BJ (cell line): ENCODE measurements at regions of chr3 and their contacts with region 1.

Region 1: GRCh38 chr3:186540221-186540834 is 3.9 kb downstream of the CRYGS start:
- DNase-seq: peak; percentile 15
- H3K4me3 ChIP-seq: no peak overlapping the region
- H3K27me3 ChIP-seq: no peaks in the 10 kb centered on the region
- CTCF ChIP-seq: peak; percentile 63

Region 2: DNA sequence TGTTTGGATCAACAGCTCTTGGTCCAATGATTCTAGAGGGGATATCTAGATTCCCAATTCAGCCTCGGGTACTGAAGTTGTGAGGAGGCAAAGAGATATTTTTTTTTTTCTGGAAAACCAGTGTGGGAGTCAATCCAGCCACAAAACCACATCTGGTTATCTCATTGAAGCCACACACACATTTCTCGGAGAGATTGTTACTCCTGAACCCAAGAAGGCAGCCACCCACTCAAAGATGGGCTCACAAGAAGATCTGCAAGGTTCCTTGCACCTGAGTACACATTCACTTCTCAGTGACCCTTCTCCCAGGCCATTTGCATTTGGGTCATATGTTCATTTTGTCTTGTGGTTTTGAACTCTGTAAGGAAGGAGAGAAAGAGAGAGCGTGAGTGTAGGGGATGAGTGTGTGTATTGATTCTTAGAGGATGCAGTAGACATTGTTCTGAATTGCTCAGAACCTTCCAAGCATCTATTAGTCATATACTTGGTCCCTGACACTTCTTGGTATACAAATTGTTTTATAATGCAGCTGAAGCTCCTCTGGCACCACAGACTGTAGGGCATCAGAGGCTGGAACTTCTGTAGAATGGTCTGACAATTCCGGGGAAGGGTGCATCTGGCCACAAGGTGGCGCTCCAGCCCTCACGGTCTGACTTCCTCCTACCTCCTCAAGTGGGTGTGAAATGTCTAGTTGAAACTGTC is 563.2 kb before region 1 on chr3:
- CTCF ChIA-PET with region 1: interaction called, 23 read pairs
- POLR2A ChIA-PET with region 1: no interaction called
- DNase-seq: no peak
- H3K4me3 ChIP-seq: no peak overlapping the region
- H3K27me3 ChIP-seq: no peaks in the 10 kb centered on the region
- CTCF ChIP-seq: peak; percentile 96

Region 3: GRCh38 chr3:185983495-185984141 is 556.7 kb before region 1 on chr3:
- CTCF ChIA-PET with region 1: interaction called, 23 read pairs
- POLR2A ChIA-PET with region 1: no interaction called
- DNase-seq: no peak
- H3K4me3 ChIP-seq: no peak overlapping the region
- H3K27me3 ChIP-seq: peaks cover 3% of the 10 kb centered on the region; the same call in 1 of the 2 replicates
- CTCF ChIP-seq: peak; percentile 90

Region 4: DNA sequence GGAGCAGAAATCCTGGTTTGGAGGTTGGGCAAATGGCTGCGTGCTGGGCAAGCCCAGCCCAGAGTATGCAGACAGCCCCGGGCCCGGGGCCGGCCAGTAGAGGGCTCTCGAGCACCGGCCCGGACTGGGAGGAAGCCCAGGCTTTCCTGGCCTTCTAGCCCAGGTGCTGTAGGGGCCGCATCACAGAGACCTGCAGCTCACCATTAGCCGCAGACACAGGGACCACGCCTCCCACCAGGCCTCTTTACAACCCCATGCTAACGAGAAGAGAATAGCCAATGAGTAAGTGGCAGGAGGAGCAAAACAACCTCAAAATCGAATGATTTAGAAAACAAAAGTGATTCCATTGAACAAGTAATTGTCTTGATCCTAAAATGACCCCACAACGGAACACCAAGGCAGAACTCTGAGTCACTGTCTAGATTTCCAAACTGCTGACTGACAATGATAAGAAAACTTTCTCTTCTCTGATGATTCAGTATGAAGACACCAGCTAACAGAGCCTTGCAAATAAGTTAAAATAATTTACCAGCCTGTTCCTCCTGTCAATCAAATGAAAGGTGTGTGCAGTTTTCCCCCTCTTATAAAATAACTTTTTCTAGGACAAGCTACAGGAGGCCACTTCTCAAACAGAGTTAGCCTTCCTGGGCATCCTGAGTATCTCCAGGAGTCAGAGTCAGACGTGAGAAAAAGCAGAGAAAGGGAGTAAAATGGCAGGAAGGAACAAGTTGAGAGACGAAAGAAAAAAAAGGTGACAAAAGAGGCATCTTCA is 280.5 kb before region 1 on chr3:
- CTCF ChIA-PET with region 1: interaction called, 56 read pairs
- POLR2A ChIA-PET with region 1: interaction called, 8 read pairs
- DNase-seq: no peak
- H3K4me3 ChIP-seq: no peak overlapping the region
- H3K27me3 ChIP-seq: peaks cover 6% of the 10 kb centered on the region; the same call in 1 of the 2 replicates
- CTCF ChIP-seq: peak; percentile 97

Region 5: DNA sequence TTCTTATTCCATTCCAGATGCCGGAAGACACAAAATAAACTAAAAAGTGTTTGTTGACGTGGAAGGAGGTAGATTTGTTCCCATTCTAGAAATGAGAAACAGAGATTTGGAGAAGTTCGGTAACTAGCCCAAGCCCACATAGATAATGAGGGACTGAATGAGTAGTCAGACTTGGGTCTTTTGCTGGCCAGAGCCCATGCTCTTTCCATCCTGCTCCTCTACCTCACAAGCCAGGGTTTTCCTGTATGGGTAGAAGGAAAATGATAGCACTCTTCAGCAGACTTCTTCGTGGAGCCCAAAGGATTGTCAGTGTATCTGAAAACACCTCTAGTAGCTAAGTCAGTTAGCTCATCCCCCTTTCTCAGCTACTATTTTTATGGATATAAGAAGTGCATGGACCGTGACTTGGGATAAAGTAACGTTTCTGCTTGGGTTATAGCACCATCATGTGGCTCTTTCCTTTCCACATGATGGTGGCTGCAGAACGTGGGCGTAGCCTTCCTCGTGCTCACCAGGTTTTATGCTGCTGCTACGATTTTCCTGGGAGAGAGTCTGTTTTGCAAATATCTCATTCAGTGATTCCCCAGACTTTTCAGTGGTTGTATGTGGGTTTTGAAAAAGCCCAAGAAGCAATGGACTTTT is 262.9 kb before region 1 on chr3:
- CTCF ChIA-PET with region 1: interaction called, 18 read pairs
- POLR2A ChIA-PET with region 1: no interaction called
- DNase-seq: no peak
- H3K4me3 ChIP-seq: no peak overlapping the region
- H3K27me3 ChIP-seq: peaks cover 1% of the 10 kb centered on the region
- CTCF ChIP-seq: peak; percentile 61

Region 6: DNA sequence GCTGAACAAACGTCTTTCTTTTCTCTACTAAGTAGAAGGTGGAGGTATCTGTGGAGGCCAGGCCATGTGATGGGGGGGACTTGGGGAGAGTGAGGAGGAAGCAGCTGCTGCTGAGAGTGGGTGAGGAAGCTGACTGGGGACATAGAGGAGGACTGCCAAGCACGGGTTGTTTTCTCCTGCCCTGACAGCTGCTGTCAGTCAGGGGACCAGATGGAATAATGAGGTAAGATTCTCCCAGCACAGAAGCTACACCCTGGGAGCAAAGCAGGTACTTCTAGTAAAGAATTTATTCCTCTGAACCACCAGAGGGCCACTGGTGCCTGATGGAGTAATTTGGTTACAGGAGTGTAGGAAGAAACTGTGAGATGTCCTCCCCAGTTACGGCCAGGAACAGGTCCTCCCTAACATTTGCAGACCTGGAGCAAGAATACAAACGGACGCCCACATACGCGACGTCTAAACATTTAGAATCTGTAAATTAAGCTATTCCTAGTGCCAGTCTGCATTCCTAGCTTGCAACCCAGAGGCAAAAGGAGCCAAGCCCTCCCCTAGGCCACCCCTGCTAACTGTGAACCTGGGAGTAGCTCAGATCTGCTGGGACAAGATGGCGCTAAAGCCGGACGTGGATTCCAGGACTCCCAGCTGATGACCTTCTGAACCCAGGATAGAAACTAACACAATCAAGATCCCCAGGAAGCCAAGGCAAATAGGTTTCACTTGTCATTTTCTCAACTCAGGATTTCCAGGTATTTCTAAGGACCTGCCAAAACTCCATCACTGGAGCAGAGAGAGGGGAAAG is 10.9 kb before region 1 on chr3:
- CTCF ChIA-PET with region 1: interaction called, 10 read pairs
- POLR2A ChIA-PET with region 1: no interaction called
- DNase-seq: no peak
- H3K4me3 ChIP-seq: no peak overlapping the region
- H3K27me3 ChIP-seq: no peaks in the 10 kb centered on the region; the same call in 1 of the 2 replicates
- CTCF ChIP-seq: no peak